ENCODE measurements at regions of chr14 and their contacts with region 1.

Region 1: DNA sequence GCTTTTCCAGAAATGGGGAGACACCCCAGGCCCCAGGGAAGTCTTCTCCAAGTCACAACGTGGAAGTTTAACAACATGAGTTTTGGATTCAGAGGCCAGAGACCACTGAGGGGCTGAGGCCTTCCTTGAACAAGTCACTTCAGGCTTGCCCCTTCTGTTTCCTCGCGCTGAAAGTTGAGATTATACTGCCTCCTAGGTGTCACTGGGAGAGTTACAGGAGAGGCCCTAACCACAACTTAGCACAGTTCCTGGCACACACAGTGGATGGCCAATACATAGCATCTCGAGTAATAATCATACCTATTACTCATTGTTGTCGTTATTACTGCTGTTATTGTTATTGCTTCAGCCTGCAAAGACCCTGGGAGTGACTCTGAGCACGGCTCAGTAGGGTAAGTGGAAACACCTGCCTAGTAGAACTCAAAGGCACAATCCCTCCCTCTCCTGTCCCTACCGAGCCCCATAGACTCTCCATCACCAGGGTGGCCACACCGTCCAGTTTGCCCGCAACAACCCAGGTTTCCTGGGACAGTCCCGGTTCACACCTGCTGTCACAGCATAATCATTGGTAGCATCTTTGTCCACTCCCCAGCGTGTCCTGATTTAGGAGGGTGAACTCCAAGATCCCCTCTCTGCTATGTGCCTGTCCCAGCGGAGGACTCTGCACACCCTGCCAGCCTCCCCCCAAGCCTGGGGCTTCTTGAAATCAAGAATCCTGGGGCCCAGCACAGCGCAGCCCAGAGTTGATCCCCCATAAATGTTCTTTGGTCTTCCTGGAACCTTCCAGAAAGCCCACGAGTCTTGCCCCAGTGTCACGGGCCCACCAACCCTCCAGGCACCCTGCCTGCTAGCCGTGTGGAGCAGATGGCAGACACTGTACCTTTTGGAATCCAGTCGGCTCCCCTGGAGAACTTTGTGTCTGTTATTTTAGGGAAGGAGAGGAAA is 85.0 kb downstream of the SYNE3 start:
- DNase-seq: no peak
- ATAC-seq: peak; percentile 65
- H3K4me3 Mint-ChIP-seq: no peak overlapping the region
- H3K27ac Mint-ChIP-seq: no peak overlapping the region
- H3K4me1 Mint-ChIP-seq: peaks cover 3% of the 10 kb centered on the region
- H3K27me3 Mint-ChIP-seq: no peaks in the 10 kb centered on the region
- CTCF ChIP-seq: no peak

Region 2: DNA sequence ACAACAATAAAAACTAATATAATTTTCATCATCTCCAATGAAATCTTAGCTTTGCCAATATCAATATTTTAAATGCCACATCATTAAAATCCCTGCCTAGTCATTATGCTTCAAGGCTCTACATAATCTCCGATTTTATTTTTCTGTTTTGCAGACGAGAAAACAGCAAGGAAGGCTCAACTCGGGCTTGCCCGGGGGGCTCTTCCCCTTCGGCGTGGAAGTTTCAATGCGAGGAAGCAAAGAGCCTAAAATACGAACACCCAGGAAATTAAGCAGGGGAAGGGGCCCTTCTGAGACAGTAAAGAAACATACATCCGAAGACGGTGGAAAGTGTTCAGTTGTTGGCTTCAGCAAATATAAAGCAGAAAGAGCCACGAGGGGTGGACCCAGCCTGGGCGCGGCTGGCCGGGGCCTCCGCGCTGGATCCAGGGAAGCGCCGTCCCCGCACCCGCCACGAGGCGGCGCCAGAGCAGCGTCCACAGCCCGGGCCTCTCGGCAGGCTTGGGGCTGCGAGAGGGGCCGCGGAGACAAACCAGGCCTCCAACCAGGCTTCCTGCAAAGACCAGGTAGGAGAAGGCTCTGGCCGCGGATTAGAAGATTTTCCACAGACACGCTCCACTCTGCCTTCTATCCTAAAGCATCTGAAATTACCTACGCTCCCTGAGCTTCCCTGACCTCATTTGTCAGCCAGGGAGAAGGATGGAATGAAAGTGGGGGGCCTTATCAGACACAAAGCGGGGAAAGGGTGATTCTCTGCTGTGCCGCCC is 742.1 kb before region 1 on chr14:
- CTCF ChIA-PET with region 1: no interaction called
- POLR2A ChIA-PET with region 1: no interaction called
- intact Hi-C with region 1: loop called (anchors 5 kb)
- DNase-seq: peak; percentile 35
- ATAC-seq: peak; percentile 49
- H3K4me3 Mint-ChIP-seq: no peak overlapping the region
- H3K27ac Mint-ChIP-seq: no peak overlapping the region
- H3K4me1 Mint-ChIP-seq: no peaks in the 10 kb centered on the region
- H3K27me3 Mint-ChIP-seq: peaks cover 14% of the 10 kb centered on the region
- CTCF ChIP-seq: no peak

Region 3: DNA sequence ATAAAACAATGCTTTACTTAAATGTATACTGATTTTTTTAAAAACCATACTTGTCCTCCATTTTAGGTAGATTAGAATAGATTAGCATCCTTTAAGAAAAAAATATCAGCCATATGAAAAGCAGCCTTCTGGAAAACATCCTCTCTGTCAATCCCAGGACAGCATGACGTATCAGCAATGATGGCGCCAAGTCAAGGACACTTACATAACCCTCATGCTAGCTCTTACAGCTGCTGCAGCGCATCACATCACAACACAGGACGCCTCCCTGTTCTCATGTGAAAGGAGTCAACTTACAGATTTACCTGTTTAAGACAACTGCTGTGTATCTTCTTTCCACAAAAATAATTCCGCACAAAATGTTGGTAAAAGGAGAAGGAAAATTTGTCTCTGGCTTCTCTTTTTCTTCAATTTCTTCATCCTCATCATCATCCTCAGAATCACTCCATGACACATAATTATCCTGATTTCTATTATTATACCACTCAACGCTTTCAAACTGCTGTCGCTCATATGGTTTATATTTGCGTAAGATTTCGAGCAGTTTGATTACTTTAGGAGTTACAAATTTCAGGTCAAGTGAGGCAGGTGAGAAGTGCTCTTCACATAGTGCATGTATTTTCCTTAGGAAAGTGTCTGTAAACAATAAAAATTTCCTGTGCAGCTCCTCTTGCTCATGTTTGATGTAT is 307.4 kb before region 1 on chr14:
- CTCF ChIA-PET with region 1: no interaction called
- POLR2A ChIA-PET with region 1: no interaction called
- intact Hi-C with region 1: loop called (anchors 10 kb)
- DNase-seq: no peak
- ATAC-seq: no peak
- H3K4me3 Mint-ChIP-seq: no peak overlapping the region
- H3K27ac Mint-ChIP-seq: no peak overlapping the region
- H3K4me1 Mint-ChIP-seq: peaks cover 1% of the 10 kb centered on the region
- H3K27me3 Mint-ChIP-seq: no peaks in the 10 kb centered on the region
- CTCF ChIP-seq: no peak

Measured in activated B cell treated with CpG ODN at 0.5 μM for 24 hours (primary cell).